PC-3 (cell line): ENCODE measurements at regions of chr17 and their contacts with region 1.

Region 1: DNA sequence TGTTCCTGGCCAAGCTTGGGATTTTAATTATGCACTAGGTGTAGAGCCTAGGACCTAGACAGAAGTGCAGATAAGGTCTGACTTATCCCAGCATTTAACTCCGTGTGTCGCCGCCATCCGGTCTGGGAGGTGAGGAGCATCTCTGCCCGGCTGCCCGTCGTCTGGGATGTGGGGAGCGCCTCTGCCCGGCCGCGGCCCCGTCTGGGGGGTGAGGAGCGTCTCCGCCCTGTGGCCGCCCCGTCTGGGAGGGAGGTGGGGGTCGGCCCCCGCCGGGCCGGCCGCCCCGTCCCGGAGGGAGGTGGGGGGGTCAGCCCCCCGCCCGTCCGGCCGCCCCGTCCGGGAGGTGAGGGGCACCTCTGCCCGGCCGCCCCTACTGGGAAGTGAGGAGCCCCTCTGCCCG is 7.1 kb upstream of the B4GALNT2 start:
- DNase-seq: no peak
- ATAC-seq: no peak
- H3K4me3 ChIP-seq: no peak overlapping the region
- H3K27ac ChIP-seq: no peak overlapping the region
- H3K4me1 ChIP-seq: no peaks in the 10 kb centered on the region
- H3K27me3 ChIP-seq: no peaks in the 10 kb centered on the region
- CTCF ChIP-seq: no peak

Region 2: DNA sequence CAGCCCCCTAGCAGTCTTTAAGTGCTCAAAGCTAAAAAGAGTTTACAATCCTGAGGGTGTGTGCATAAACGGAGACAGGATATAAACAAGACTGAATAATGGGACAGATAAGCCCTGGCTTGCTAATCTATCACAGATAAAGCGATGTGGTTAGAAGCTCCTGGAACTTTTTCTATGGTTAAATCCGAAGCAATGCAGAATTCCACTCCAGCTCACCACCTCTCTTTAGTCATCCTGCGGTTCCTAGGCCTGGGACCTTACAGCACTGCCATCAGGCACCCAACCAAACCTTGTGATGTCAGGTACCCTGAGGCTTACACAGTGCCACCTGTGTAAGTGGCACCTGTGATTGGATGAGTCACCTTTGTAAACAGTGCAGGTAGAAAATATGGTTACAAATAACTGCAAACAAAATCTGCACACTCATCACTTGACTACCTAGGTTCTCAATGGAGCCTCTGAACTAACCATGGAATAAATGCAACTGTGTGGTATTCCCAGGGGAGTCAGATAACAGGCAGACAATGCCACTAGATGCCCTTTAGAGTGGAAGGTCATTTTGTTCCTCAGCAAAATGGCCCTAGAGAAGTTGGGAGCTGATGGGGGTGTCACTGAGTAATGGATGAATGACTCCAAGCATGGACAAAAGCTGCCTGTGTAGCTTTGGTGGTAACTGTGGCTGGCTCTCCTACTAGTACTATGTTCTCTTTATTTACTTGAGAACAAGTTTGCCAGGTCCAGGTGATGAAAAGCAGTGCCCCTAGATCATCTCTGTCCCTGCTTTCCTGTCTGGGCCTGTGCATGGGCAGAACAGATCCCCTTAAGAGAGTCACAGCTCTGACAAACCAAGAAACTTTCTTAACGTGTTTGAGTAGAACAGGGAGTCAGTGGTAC is 24.1 kb before region 1 on chr17:
- CTCF ChIA-PET with region 1: no interaction called
- POLR2A ChIA-PET with region 1: interaction called, 10 read pairs
- intact Hi-C with region 1: no loop called
- DNase-seq: peak; percentile 99
- ATAC-seq: peak; percentile 84
- H3K4me3 ChIP-seq: peak overlapping the region; percentile 36; the same call in 1 of the 2 replicates
- H3K27ac ChIP-seq: peak overlapping the region; percentile 96
- H3K4me1 ChIP-seq: peaks cover 21% of the 10 kb centered on the region
- H3K27me3 ChIP-seq: no peaks in the 10 kb centered on the region
- CTCF ChIP-seq: no peak

Region 3: DNA sequence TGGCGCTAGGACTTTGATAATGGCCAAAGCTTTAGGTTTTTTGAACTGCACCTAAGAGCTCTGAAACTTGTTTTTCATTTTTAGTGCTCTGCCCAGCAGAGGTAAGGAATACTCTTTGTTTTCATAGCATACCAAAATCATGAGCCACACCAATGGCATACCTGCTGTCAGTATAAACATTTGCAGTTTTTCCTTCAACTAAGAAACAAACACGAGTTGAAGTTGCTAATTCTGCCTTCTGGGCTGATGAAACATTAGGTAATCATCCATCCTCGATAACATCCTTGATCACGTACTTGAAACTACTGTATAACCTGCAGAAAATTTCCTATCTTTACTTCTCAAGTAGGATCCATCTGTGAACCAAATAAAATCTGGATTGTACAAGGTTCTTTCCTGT is 13.5 kb before region 1 on chr17:
- CTCF ChIA-PET with region 1: no interaction called
- POLR2A ChIA-PET with region 1: no interaction called
- intact Hi-C with region 1: no loop called
- DNase-seq: peak; percentile 63
- ATAC-seq: peak; percentile 58; the same call in 1 of the 2 replicates
- H3K4me3 ChIP-seq: no peak overlapping the region
- H3K27ac ChIP-seq: no peak overlapping the region
- H3K4me1 ChIP-seq: peaks cover 27% of the 10 kb centered on the region
- H3K27me3 ChIP-seq: no peaks in the 10 kb centered on the region
- CTCF ChIP-seq: no peak